Activated CD8-positive, alpha-beta T cell treated with anti-CD3 and anti-CD28 coated beads for 36 hours (primary cell): ENCODE measurements at regions of chr12 and their contacts with region 1.

Region 1: GRCh38 chr12:9673404-9674225 is 4.1 kb downstream of the CLEC2D start:
- DNase-seq: peak; percentile 90
- ATAC-seq: peak; percentile 41
- H3K4me3 Mint-ChIP-seq: peak overlapping the region; percentile 94
- H3K27ac Mint-ChIP-seq: peak overlapping the region; percentile 99
- H3K4me1 Mint-ChIP-seq: peaks cover 35% of the 10 kb centered on the region
- H3K27me3 Mint-ChIP-seq: no peaks in the 10 kb centered on the region
- CTCF ChIP-seq: no peak

Region 2: GRCh38 chr12:9634177-9634803 is 39.3 kb before region 1 on chr12:
- CTCF ChIA-PET with region 1: interaction called, 6 read pairs
- POLR2A ChIA-PET with region 1: interaction called, 10 read pairs
- intact Hi-C with region 1: no loop called
- DNase-seq: peak; percentile 92
- ATAC-seq: peak; percentile 89
- H3K4me3 Mint-ChIP-seq: peak overlapping the region; percentile 31
- H3K27ac Mint-ChIP-seq: peak overlapping the region; percentile 85
- H3K4me1 Mint-ChIP-seq: peaks cover 54% of the 10 kb centered on the region
- H3K27me3 Mint-ChIP-seq: no peaks in the 10 kb centered on the region
- CTCF ChIP-seq: peak; percentile 91

Region 3: DNA sequence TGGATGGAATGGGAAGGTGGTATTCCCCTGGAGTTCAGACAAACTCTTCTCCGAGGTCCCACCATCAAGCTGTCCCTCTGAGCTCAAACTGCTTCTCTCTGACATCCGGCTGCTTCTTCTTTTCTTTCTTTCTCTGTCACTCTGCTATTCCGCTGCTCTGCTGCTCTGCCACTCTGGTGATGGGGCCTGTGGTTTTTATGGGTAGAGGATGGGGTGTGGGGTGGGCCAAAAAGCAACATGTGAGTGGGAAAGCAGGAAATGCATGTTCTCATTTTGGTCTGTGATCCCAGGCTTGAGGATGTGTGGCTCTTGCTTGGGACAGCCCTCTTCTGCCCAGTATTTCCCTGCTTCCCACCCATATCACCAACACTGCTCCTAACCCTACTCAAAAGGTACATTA is 28.6 kb after region 1 on chr12:
- CTCF ChIA-PET with region 1: interaction called, 18 read pairs
- POLR2A ChIA-PET with region 1: interaction called, 10 read pairs
- intact Hi-C with region 1: no loop called
- DNase-seq: peak; percentile 80
- ATAC-seq: peak; percentile 58
- H3K4me3 Mint-ChIP-seq: peak overlapping the region; percentile 71
- H3K27ac Mint-ChIP-seq: peak overlapping the region; percentile 95
- H3K4me1 Mint-ChIP-seq: peaks cover 72% of the 10 kb centered on the region
- H3K27me3 Mint-ChIP-seq: no peaks in the 10 kb centered on the region
- CTCF ChIP-seq: no peak

Region 4: DNA sequence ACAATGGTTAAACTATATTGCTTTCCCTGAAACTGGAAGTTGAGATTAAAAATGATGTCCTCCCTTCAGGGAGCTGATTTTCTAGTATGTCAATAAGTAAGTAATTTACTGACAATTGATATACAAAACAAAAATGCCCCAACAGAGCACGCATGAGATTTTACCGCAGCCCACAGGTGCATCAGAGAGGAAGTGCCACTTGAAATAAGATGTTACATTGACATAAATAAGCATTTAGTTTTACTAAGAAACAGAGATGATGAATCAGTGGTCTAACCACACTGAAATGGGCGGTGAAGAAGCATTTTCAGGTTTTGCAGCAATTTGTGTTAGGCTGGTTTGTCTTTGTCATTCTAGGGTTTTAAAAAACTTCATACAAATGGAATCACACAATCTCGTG is 68.1 kb after region 1 on chr12:
- CTCF ChIA-PET with region 1: interaction called, 6 read pairs
- POLR2A ChIA-PET with region 1: interaction called, 16 read pairs
- intact Hi-C with region 1: loop called (anchors 5 kb)
- DNase-seq: peak; percentile 95
- ATAC-seq: peak; percentile 69
- H3K4me3 Mint-ChIP-seq: peak overlapping the region; percentile 74
- H3K27ac Mint-ChIP-seq: peak overlapping the region; percentile 90
- H3K4me1 Mint-ChIP-seq: peaks cover 71% of the 10 kb centered on the region
- H3K27me3 Mint-ChIP-seq: no peaks in the 10 kb centered on the region
- CTCF ChIP-seq: no peak

Region 5: GRCh38 chr12:9869307-9870161 is 195.9 kb after region 1 on chr12 and contains the start of gene CLEC2B:
- CTCF ChIA-PET with region 1: no interaction called
- POLR2A ChIA-PET with region 1: interaction called, 45 read pairs
- intact Hi-C with region 1: no loop called
- DNase-seq: peak; percentile 70
- ATAC-seq: peak; percentile 68
- H3K4me3 Mint-ChIP-seq: peak within 1 kb of the TSS; percentile 85
- H3K27ac Mint-ChIP-seq: peak within 1 kb of the TSS; percentile 89
- H3K4me1 Mint-ChIP-seq: peaks cover 23% of the 10 kb centered on the region
- H3K27me3 Mint-ChIP-seq: no peaks in the 10 kb centered on the region
- CTCF ChIP-seq: no peak
- total RNA-seq, gene CLEC2B: 38.4 to 43.2 TPM

Region 6: GRCh38 chr12:10562306-10562933 is 888.8 kb after region 1 on chr12:
- CTCF ChIA-PET with region 1: no interaction called
- POLR2A ChIA-PET with region 1: interaction called, 14 read pairs
- intact Hi-C with region 1: no loop called
- DNase-seq: peak; percentile 35
- ATAC-seq: no peak
- H3K4me3 Mint-ChIP-seq: peak overlapping the region; percentile 10
- H3K27ac Mint-ChIP-seq: peak overlapping the region; percentile 58
- H3K4me1 Mint-ChIP-seq: peaks cover 70% of the 10 kb centered on the region
- H3K27me3 Mint-ChIP-seq: no peaks in the 10 kb centered on the region
- CTCF ChIP-seq: peak; percentile 87